Activated T-helper 2 cell treated with anti-CD3 and anti-CD28 coated beads, Interferon-gamma antibody, Interleukin-2, Interleukin-4, amounts not matched to agents 10 μg/mL and 5 μg/mL and 100 μg/mL, durations not matched to agents 14 hours and 24 hours and 36 hours (primary cell): ENCODE measurements at regions of chr16 and their contacts with region 1.

Region 1: DNA sequence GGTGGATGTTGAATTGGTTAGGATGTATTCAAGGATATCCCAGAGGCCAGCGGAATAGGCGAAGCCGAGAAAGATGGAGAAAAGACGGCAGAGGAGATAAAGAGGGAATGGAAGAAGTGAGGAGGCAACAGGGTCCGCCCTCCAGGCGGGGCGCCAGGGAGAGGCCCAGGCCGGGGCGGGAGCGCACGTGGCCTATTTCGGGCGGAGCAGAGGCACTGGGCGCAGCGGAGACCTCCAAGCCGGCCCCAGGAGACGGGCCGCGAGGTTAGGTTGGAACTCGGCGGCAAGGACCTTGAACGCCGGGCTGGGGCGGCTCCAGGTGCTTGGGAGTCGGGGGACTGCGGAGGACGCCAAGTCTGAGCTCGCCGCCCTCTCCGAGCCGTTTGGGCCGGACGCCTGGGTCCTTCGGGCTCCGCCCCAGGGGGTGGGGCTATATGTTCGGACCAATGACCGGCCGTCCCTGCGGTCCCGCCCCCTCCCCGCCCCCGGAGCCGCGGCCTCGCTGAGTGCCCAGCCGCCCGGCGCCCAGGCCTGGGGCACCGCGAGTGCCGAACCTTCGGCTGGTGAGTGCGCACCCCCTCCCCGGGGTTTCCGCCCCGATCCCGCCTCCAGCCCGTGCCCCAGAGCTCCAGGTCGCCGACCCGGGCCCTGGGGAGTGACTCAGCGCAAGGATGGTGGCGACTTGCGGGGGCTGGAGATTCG is at the start of gene ZNF771:
- DNase-seq: peak; percentile 82
- H3K4me3 Mint-ChIP-seq: peak within 1 kb of the TSS; percentile 95
- H3K27ac Mint-ChIP-seq: peak within 1 kb of the TSS; percentile 97
- H3K4me1 Mint-ChIP-seq: peaks cover 28% of the 10 kb centered on the region
- H3K27me3 Mint-ChIP-seq: no peaks in the 10 kb centered on the region
- total RNA-seq, gene ZNF771: 8.3 and 9.3 TPM in 2 replicates

Region 2: DNA sequence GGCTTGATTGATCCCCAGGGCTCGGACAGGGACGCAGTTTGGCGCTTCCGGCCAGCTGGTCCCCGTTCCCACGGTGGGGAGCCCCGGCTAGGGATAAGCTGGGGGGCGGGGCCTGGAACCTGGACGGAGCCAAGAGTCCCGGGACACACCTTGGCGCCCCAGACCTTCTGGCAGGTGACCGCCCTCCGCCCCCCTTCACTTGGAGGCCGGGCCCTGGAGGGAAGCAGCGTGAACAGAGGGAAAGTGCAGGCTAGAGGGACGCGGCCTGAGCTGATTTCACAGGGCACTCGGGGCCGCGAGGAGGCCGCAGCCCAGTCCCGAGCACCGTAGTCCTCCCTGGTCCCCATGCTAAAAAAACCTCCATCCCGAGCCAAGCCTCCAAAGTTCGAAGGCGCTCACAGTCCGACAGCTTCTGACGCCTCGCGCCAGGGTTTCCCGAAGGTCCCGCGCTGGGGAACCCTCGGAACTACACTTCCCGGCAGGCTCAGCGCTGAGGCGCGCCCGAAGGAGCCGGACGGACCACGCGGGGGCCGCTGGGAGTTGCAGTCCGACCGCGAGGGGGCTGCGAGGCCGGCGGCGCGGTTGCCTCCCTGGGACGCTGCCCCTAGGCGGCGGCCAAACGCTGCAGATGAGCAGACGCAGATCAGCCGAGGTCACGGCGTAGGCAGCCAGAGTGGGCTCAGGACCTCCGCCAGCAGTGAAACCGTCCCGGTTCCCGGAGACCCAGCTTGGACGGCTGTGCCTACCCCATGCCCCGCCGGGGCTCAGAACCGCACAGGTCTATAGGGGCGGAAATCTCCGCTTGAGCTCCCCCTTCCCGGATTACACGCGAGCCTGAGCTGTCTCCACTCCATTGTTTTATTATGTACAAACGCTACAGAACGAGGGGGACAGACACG is 315.5 kb before region 1 on chr16 and contains the start of gene TBX6:
- intact Hi-C with region 1: loop called (anchors 10 kb)
- DNase-seq: peak; percentile 92
- H3K4me3 Mint-ChIP-seq: peak within 1 kb of the TSS; percentile 88
- H3K27ac Mint-ChIP-seq: peak within 1 kb of the TSS; percentile 97
- H3K4me1 Mint-ChIP-seq: peaks cover 37% of the 10 kb centered on the region
- H3K27me3 Mint-ChIP-seq: no peaks in the 10 kb centered on the region
- total RNA-seq, gene TBX6: 2.7 and 2.9 TPM in 2 replicates

Region 3: GRCh38 chr16:30122604-30123160 is 284.6 kb before region 1 on chr16:
- intact Hi-C with region 1: loop called (anchors 5 kb)
- DNase-seq: no peak
- H3K4me3 Mint-ChIP-seq: peak overlapping the region; percentile 89
- H3K27ac Mint-ChIP-seq: peak overlapping the region; percentile 85
- H3K4me1 Mint-ChIP-seq: peaks cover 19% of the 10 kb centered on the region
- H3K27me3 Mint-ChIP-seq: no peaks in the 10 kb centered on the region

Region 4: DNA sequence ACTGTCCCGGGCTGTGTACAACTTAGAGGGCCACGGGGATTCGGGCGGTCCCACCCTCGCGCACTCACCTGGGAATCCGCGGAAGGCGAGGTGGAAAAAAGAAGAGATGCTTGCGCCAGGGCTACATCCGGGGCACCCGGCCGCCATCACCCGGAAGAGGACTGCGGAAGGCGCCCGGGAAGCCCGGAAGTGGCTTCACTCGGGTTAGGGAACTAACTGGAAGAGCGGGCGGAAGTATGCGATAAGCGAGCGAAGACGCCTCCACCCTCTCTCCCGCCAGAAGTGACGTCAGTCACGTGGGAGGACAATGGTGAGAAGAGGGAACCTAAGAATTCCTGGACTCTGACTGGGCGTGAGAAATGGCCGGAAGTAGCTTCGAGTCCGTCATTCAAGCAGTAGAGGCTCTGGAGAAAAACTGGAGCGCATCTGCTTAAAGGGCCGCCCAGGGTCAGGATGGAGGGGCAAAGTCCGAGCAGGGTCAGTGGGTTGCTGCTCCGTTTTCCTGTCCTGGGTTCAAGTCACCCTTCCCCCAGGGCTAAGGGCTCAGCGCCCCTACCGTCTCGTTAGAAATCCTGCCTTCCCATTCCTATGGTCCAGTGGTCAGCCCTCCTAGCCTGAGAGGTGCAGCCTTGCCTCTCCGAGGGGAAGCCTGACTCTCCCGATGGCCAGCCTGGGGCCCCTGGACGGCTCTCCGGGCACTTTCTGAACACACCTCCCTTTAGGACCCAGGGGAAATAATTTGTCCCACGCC is 51.9 kb before region 1 on chr16 and contains the start of gene CD2BP2:
- intact Hi-C with region 1: loop called (anchors 10 kb)
- DNase-seq: peak; percentile 84
- H3K4me3 Mint-ChIP-seq: peak within 1 kb of the TSS; percentile 93
- H3K27ac Mint-ChIP-seq: peak within 1 kb of the TSS; percentile 89
- H3K4me1 Mint-ChIP-seq: peaks cover 37% of the 10 kb centered on the region
- H3K27me3 Mint-ChIP-seq: no peaks in the 10 kb centered on the region
- total RNA-seq, gene CD2BP2: 80.1 and 84.5 TPM in 2 replicates

Region 5: DNA sequence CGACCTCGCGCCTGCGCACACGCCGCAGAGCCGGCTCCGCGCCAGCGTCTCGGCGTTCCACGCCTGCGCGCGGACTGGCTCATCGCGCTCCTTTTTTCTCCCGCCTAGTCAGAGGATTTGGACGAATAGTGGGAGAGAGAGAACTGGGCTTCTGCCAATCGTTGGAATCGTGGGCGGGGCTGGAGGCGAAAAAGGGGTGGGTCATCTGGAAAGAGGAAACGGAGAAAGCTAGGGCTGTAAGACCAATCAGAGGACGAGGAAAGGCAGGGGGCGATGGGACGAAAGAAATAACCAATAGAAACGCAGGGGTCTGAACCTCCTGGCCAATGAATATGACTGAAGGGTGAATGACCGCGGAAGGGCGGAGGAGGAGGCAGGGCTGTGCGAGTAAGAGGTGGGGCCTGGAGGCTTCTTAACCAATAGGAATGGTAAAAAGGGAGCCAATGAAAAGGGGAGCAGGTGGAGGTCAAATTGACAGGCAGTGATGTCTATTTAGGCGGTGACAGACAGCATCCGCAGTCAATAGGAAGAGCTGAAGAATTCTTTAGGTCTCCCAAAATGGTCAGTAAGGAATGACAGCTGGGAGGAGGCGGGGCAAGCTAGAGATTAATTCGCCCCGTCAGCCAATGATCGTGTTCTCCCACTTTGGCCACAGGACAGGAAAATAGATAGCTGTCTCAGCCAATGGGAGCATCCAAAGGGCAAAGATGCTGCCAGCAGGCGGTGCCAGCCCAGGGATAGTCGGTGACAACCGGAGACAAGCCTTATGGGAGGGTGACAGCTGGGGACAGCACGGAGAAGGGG is 36.6 kb before region 1 on chr16 and contains the start of gene TBC1D10B:
- intact Hi-C with region 1: loop called (anchors 2 kb)
- DNase-seq: peak; percentile 100
- H3K4me3 Mint-ChIP-seq: peak within 1 kb of the TSS; percentile 87
- H3K27ac Mint-ChIP-seq: peak within 1 kb of the TSS; percentile 91
- H3K4me1 Mint-ChIP-seq: peaks cover 40% of the 10 kb centered on the region
- H3K27me3 Mint-ChIP-seq: no peaks in the 10 kb centered on the region
- total RNA-seq, gene TBC1D10B: 63.4 and 64.4 TPM in 2 replicates

Region 6: GRCh38 chr16:30378236-30379204 is 28.7 kb before region 1 on chr16:
- intact Hi-C with region 1: loop called (anchors 2 kb)
- DNase-seq: peak; percentile 97
- H3K4me3 Mint-ChIP-seq: peak overlapping the region; percentile 81
- H3K27ac Mint-ChIP-seq: peak overlapping the region; percentile 99
- H3K4me1 Mint-ChIP-seq: peaks cover 37% of the 10 kb centered on the region
- H3K27me3 Mint-ChIP-seq: no peaks in the 10 kb centered on the region

Region 7: GRCh38 chr16:30395155-30395991 is 11.9 kb before region 1 on chr16 and contains the start of gene ZNF48:
- intact Hi-C with region 1: loop called (anchors 1 kb)
- DNase-seq: peak; percentile 41
- H3K4me3 Mint-ChIP-seq: peak within 1 kb of the TSS; percentile 87
- H3K27ac Mint-ChIP-seq: peak within 1 kb of the TSS; percentile 88
- H3K4me1 Mint-ChIP-seq: peaks cover 33% of the 10 kb centered on the region
- H3K27me3 Mint-ChIP-seq: no peaks in the 10 kb centered on the region
- total RNA-seq, gene ZNF48: 13.4 TPM in 2 replicates

Region 8: DNA sequence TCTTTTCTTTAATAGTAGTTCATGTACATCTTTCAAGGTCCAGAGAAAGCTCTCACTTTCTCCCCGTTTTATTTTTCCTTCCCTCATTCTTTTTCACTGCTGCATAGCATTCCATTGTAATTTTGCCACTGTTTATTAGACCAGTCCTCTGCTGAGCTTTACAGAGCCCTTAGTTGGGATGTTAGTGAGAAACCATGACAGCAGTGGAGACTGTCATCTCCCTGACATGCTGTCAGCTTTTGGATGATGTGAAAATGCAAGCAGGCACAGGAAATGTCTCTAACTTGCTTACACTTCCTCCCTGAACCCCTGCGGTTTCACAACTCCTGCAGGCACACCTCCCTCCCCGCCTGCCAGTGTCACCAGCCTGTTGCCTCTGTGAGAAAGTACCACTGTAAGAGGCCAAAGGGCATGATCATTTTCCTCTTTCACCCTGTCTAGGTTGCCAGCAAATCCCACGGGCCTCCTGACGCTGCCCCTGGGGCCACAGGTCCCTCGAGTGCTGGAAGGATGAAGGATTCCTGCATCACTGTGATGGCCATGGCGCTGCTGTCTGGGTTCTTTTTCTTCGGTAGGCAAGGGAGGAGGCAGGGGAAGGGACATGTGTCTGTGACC is 65.2 kb after region 1 on chr16 and contains the start of gene ITGAL:
- intact Hi-C with region 1: no loop called
- DNase-seq: peak; percentile 83
- H3K4me3 Mint-ChIP-seq: peak within 1 kb of the TSS; percentile 99
- H3K27ac Mint-ChIP-seq: peak within 1 kb of the TSS; percentile 97
- H3K4me1 Mint-ChIP-seq: peaks cover 52% of the 10 kb centered on the region
- H3K27me3 Mint-ChIP-seq: no peaks in the 10 kb centered on the region
- total RNA-seq, gene ITGAL: 292 and 293 TPM in 2 replicates